Activated T-helper 1 cell treated with anti-CD3 and anti-CD28 coated beads, Interleukin-12 subunit alpha, Interleukin-12 subunit beta, Interleukin-2, Interleukin-4 antibody, amounts not matched to agents 30 ng/mL and 10 ng/mL and 1 ng/mL, durations not matched to agents 14 hours and 24 hours and 36 hours (primary cell): ENCODE measurements at regions of chr15 and their contacts with region 1.

Region 1: DNA sequence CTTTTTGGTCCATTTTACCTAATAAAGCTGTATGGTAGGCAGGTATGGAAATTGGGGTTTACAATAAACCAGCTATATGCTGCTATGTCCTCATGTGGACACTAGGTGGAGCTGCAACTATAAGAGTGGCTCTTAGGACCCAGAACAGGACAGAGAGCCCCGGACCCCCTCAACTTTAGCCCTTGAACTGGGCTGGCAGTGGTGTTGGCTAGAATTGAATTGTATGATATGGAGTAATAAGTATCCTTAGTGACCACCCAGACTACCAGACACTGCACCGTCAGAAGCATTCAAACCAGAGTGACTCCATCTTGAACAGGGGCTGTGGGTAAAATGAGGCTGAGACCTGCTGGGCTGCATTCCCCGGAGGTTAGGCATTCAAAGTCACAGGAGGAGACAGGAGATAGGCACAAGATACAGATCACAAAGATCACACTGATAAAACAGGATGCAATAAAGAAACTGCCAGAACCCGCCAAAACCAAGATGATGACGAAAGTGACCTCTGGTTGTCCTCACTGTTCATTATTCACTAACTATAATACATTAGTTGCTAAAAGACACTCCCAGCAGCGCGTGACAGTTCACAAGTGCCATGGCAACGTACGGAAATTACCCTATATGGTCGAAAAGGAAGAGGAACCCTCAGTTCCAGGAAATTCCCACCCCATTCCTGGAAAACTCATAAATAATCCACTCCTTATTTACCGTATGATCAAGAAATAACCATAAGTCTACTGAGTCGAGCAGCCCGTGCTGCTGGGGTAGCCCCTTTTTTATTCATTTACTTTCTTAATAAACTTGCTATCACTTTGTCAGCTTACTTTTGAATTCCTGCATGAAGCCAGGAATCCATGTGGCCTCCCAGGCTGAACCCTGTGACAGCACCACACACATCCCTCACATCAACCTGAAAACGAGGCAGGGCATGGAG is 68.7 kb upstream of the BLM start:
- DNase-seq: peak; percentile 75
- H3K4me3 Mint-ChIP-seq: peak overlapping the region; percentile 35
- H3K27ac Mint-ChIP-seq: peak overlapping the region; percentile 97
- H3K4me1 Mint-ChIP-seq: peaks cover 49% of the 10 kb centered on the region
- H3K27me3 Mint-ChIP-seq: no peaks in the 10 kb centered on the region

Region 2: DNA sequence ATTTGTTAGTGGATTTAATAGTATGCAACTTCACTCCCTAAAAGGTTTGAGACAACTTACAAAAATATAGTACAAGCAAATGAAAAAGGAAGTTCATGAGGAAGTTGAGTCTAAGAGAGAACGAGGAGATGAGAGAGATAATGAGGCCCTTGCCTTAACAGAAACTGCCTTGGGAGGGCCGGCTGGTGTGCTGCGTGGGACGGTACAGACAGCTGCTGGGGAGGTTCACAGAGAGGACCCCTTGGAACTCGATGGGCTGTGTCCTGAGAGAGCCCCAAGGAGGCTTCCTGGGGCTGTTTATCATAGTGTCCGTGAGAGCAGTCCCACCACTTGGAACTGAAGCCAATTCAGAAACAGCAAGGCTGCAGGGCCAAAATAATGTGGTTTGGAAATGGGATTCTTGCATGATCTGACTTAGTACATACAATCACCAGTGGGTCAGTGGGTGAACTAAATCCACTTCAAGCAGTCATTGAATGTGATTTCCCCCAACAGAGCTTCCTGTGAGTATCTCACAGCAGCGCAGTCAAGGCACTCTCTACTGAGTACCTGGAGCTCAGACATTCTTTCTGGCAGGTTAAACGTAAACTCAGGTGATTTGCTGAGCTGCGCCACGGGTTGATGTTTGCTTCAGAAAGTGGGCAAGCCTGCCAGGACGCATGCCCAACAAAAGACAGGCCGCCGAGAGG is 27.9 kb before region 1 on chr15:
- intact Hi-C with region 1: no loop called
- DNase-seq: no peak
- H3K4me3 Mint-ChIP-seq: peak overlapping the region; percentile 21
- H3K27ac Mint-ChIP-seq: peak overlapping the region; percentile 83
- H3K4me1 Mint-ChIP-seq: peaks cover 37% of the 10 kb centered on the region
- H3K27me3 Mint-ChIP-seq: no peaks in the 10 kb centered on the region

Region 3: DNA sequence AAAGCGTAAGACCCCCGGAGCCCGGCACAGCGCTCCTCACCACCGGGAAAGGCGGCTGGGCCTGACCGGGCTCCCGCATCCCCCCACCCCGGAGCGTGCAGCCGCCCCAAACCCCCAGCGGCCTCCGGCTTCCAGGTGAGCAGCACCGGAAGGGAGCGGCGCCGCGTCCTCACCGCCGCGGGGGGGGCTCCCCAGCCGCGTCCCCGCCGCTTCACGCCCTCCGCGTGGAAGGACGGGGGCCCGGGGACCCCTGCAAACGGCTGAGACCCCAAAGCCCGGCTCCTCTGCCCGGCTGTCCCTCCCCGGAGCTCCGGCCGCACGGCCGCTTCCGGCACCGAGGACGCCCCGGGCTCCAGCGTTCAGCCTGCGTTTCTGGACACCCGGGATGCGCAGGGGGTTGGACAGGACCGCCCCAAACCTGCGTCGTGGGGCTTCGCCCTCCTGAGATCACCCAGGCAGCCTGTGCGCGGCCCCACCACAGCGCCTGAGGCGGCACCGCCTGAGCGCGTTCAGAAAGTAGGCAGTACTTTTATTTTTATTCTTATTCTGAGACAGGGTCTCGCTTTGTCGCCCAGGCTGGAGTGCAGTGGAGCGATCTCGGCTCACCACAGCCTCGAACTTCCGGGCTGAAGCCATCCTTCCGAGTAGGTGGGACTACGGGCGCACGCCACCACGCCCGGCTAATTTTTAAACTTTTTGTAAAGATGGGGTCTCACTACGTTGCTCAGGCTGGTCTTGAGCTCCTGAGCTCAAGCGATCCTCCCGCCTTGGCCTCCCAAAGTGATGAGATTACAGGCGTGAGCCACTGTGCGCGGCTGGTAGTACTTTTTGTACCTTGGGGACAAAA is 17.1 kb after region 1 on chr15:
- intact Hi-C with region 1: loop called (anchors 1 kb)
- DNase-seq: peak; percentile 51
- H3K4me3 Mint-ChIP-seq: peak overlapping the region; percentile 85
- H3K27ac Mint-ChIP-seq: peak overlapping the region; percentile 90
- H3K4me1 Mint-ChIP-seq: peaks cover 56% of the 10 kb centered on the region
- H3K27me3 Mint-ChIP-seq: peaks cover 4% of the 10 kb centered on the region

Region 4: DNA sequence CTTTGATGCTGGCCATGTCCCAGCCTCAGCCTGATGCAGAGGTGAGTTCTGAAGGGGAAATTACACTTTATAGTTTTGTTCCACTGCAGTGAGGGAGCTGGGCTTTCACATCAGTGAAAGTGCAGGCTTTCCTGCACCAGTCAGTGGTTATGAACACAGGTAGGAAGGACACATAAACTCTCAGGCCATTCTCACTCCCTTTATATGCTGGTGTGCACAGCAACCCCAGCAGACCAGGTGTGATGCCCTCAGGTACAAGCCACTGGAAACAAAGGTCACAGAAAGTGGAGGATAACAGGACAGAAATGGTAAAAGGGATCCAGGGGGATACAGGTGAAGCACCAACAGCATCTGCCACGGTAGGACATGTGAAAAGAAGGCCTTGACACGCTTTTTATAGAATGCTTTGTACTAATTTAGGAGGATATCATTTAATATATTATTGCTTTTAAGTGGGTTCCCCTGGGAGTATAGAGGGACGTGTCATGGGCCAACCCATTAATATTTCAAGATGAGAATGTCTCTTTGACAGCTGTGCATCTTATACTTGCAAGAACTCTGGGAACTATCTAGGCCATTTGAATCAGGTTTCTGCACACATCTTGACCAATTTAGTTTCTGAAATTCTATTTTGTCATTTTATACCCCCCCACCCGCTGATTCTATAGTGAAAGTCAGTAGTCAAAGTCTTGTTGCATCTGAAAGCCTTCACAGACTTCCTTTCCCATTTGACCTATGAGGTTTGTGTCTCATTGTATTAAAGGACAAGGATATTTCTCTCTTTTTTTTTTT is 43.8 kb after region 1 on chr15:
- intact Hi-C with region 1: loop called (anchors 1 kb)
- DNase-seq: no peak
- H3K4me3 Mint-ChIP-seq: no peak overlapping the region
- H3K27ac Mint-ChIP-seq: no peak overlapping the region
- H3K4me1 Mint-ChIP-seq: peaks cover 52% of the 10 kb centered on the region
- H3K27me3 Mint-ChIP-seq: no peaks in the 10 kb centered on the region

Region 5: DNA sequence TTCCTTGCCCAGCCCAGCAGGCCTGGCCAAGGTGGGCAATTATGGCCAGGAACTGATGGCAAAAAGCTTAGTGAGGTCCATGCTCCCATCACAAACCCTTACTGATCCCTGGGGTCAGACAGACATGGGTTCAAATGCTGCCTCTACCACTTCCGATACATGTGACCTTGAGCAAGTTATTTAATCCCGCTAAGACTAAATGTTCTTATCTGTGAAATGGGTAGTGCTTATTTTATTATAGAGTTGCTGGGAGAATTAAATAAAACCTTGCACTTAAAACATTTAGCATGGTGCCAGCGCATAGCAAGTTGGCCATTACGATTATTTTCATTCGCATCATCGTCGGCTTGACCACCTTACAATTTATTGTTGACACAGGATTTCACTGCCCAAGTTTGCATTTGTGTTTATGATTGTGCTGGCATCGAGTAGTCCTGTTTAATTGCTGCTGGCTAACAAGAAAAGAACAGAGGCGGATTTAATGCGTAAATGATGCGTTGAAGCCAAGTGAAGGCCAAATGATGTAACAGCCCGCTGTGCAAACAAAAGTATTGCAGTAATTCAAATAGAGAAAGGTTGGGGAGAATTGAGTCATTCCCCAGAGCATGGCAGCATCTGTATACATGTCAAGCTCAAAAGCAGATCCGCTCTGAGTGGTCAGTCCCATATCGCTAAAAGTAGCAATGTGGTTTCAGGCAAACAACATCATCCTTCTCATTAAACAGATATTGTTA is 212.7 kb after region 1 on chr15:
- intact Hi-C with region 1: loop called (anchors 1 kb)
- DNase-seq: no peak
- H3K4me3 Mint-ChIP-seq: no peak overlapping the region
- H3K27ac Mint-ChIP-seq: peak overlapping the region; percentile 55
- H3K4me1 Mint-ChIP-seq: peaks cover 71% of the 10 kb centered on the region
- H3K27me3 Mint-ChIP-seq: no peaks in the 10 kb centered on the region

Region 6: DNA sequence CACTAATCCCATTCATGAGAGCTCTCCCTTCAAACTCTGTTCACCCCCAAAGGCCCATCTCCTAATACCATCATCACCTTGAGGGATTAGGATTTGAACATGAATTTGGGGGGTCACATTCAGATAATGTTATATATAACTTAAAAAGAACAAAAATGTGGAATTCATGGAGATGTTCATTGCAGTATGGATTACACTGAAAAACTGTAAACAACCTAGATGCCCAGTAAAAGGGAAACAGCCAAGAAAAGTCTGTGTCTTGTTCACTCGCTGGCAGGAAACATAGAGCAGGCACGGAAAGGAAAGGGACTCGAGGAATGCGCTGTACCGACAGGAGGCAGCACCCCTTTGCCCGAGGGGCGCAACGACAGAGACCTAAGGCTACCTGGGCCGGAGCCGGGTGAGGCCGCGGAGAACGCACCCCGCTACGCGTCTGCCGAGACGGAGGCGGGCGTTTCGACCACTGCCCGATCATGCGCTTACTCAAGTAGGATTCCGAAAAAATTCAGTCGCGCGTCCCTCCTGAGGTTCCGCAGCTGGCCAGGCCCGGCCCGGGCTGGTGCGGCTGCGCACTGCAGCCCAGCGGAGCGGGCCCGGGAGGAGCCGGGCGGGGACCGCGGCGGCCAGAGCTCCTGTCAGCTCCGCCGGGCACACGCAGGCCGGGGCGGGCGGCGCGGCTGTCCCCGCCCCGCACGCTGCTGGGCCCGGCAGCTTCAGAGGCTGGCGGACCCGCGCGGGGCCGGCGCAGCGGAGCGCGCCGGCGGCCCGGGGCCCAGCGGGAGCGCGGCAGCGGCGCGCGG is 253.8 kb after region 1 on chr15:
- intact Hi-C with region 1: loop called (anchors 1 kb)
- DNase-seq: peak; percentile 69
- H3K4me3 Mint-ChIP-seq: peak overlapping the region; percentile 79
- H3K27ac Mint-ChIP-seq: peak overlapping the region; percentile 82
- H3K4me1 Mint-ChIP-seq: peaks cover 44% of the 10 kb centered on the region
- H3K27me3 Mint-ChIP-seq: no peaks in the 10 kb centered on the region